Activated CD8-positive, alpha-beta T cell treated with anti-CD3 and anti-CD28 coated beads for 36 hours (primary cell): ENCODE measurements at regions of chr6 and their contacts with region 1.

Region 1: DNA sequence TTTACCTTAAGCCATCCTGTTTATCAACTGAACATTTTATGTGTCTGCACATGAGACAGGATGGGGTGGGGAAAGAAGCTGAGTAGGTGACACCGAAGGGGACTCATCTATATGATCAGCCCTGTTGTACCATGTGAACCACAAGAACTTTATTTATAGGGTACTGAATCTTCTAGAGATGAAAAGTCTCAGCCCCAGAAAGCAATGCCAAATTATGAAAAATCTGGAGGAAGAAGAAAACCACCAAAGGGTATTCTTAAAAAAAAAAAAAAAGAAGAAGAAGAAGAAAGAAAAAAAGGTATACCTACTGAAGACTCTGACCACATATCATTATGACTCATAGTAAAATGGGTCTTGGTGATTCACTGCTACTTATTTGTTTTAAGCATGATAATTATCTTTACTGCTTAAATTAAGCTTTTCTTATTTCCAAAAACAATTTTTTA is 39.8 kb upstream of the HBS1L start:
- DNase-seq: peak; percentile 69
- ATAC-seq: peak; percentile 90
- H3K4me3 Mint-ChIP-seq: peak overlapping the region; percentile 39
- H3K27ac Mint-ChIP-seq: peak overlapping the region; percentile 91
- H3K4me1 Mint-ChIP-seq: peaks cover 72% of the 10 kb centered on the region
- H3K27me3 Mint-ChIP-seq: no peaks in the 10 kb centered on the region
- CTCF ChIP-seq: no peak

Region 2: GRCh38 chr6:135114355-135115145 is 20.1 kb after region 1 on chr6:
- CTCF ChIA-PET with region 1: interaction called, 4 read pairs
- POLR2A ChIA-PET with region 1: interaction called, 13 read pairs
- intact Hi-C with region 1: loop called (anchors 2 kb)
- DNase-seq: peak; percentile 84
- ATAC-seq: peak; percentile 72
- H3K4me3 Mint-ChIP-seq: peak overlapping the region; percentile 7
- H3K27ac Mint-ChIP-seq: peak overlapping the region; percentile 91
- H3K4me1 Mint-ChIP-seq: peaks cover 79% of the 10 kb centered on the region
- H3K27me3 Mint-ChIP-seq: no peaks in the 10 kb centered on the region
- CTCF ChIP-seq: no peak

Region 3: DNA sequence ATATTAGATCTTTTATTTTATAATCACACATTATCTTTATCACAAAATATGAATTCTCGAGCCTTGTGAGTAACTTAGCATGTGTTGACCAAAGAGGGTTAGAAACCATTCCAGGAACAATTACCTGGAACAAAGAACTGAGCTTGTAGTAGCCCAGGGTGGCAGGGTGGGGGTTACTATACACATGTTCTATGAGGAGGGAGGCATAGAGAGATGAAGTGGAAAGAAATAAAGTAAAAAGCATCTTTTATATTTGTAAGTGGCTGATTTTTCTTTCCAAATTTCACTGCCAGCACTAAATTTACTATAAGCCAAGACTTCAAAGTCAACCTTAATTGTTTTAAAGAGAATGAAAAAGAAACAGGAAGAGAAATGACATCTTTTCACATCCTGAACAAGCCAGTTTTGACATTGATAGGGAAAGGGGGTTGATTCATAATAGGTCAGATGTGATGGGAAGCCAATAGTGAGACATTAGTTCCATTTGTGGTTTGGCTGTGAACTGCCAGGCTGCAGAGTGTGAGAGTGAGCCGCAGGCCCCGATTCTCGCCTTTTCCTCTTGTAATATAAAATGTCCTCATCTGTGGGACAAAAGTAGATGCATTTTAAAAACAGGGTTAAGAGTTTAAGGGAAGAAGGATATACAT is 34.0 kb after region 1 on chr6:
- CTCF ChIA-PET with region 1: interaction called, 3 read pairs
- POLR2A ChIA-PET with region 1: interaction called, 4 read pairs
- intact Hi-C with region 1: loop called (anchors 5 kb)
- DNase-seq: peak; percentile 88
- ATAC-seq: peak; percentile 91
- H3K4me3 Mint-ChIP-seq: peak overlapping the region; percentile 52
- H3K27ac Mint-ChIP-seq: peak overlapping the region; percentile 97
- H3K4me1 Mint-ChIP-seq: peaks cover 56% of the 10 kb centered on the region
- H3K27me3 Mint-ChIP-seq: no peaks in the 10 kb centered on the region
- CTCF ChIP-seq: no peak

Region 4: DNA sequence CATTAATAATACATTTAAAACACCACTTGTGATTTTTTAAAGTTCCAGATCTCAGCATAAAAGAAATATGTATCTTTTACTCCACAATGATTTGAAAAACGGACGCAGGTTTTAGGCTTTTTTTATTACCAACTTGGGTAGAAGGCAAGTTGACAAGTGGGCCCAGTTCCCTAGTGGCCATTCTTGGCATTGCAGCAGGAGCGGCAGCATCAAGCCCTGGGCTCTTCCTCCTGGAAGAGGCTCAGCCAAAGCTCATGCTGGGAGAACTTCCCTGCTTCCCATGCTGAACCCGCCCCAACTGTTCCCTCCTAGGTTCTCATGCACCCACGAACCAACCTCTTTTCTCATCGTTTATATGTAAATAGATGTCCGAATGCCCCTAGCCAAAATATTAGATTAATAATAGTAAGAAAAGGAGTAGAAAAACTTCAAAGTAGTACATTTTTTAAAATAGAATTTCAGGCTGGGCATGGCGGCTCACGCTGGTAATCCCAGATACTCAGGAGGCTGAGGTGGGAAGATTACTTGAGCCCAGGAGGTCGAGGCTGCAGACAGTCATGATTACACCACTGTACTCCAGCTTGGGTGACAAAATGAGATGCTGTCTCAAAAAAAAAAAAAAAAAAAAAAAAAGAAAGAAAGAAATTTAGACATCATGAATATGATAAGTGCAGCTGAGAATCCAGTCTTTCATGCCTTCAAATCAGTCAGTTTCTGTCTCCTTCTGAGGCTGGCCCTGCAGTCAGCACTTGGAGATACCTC is 68.4 kb after region 1 on chr6:
- CTCF ChIA-PET with region 1: interaction called, 3 read pairs
- POLR2A ChIA-PET with region 1: interaction called, 4 read pairs
- intact Hi-C with region 1: loop called (anchors 5 kb)
- DNase-seq: peak; percentile 66
- ATAC-seq: no peak
- H3K4me3 Mint-ChIP-seq: peak overlapping the region; percentile 51
- H3K27ac Mint-ChIP-seq: peak overlapping the region; percentile 97
- H3K4me1 Mint-ChIP-seq: peaks cover 61% of the 10 kb centered on the region
- H3K27me3 Mint-ChIP-seq: no peaks in the 10 kb centered on the region
- CTCF ChIP-seq: peak; percentile 98